ENCODE measurements at regions of chr15 and their contacts with region 1.

Region 1: DNA sequence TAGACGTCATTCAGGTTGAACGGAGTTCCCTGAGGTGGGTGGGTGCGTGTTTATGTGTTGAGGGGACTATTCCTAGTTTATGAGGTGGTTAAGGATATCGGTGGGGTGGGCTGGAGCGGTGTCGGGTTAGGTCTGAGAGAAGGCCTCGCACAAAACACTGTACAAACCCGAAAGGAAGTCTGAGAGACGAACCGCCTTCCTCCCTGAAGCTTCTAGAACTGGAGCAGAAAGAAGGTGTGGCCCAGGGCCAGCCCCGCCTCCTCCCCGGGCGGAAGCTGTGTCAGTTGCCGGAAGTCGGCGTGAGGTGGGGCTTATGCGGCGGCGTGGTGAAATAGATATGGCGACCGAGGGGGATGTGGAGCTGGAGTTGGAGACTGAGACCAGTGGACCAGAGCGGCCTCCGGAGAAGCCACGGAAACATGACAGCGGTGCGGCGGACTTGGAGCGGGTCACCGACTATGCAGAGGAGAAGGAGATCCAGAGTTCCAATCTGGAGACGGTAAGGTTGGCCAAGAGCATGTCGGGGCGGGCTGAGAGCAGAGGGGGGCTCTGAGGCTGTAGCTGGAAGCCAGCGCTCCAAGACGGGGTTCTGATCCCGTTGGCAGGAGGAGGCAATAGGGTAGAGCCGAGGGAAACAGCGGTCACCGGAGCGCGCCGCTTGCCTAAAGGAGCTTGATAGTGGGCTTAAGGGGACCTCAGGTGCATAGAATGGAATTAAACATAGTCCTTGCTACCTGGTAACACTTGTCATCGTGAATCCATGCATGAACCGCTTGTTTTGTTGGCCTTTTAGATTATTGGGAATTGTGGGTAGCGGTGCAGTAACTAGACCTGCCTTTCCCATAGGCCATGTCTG is at the start of gene HYPK:
- DNase-seq: peak; percentile 94
- H3K4me3 Mint-ChIP-seq: peak within 1 kb of the TSS; percentile 100
- H3K27ac Mint-ChIP-seq: peak within 1 kb of the TSS; percentile 93
- H3K4me1 Mint-ChIP-seq: peaks cover 47% of the 10 kb centered on the region
- H3K27me3 Mint-ChIP-seq: no peaks in the 10 kb centered on the region
- total RNA-seq, gene HYPK: 14.3 to 14.4 TPM

Region 2: DNA sequence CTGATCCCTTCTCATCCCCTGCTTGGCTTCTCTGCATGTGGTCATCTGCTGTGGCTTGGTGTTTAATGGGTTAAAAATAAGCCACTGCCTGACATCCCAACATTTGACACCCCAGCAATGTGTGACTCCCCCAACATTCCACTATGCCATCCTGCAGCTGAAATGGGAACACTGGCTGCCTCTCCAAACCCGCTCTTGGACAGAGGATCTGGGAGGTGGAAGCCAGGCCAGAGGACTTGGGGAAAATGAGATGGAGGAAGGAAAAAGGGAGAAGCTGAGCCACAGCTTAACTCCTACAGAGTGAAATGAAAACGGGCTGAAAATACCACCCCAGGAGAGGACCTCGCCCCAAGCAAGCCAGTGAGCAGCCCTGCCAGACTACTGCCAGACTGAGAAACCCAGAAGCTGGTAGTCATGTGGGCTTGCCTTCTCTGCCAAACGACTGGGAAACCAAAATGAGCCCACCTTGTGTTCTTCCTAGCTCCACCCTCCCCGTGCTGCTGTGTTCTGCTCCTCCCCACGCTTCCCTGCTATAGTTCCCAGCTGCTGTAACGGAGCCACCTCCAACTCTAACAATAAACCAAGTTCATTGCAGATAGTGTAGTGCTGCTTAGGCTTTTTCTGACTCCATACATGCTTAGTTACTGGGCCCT is 269.4 kb before region 1 on chr15:
- CTCF ChIA-PET with region 1: no interaction called
- POLR2A ChIA-PET with region 1: no interaction called
- DNase-seq: no peak
- H3K4me3 Mint-ChIP-seq: no peak overlapping the region
- H3K27ac Mint-ChIP-seq: no peak overlapping the region
- H3K4me1 Mint-ChIP-seq: peaks cover 4% of the 10 kb centered on the region
- H3K27me3 Mint-ChIP-seq: no peaks in the 10 kb centered on the region

Region 3: DNA sequence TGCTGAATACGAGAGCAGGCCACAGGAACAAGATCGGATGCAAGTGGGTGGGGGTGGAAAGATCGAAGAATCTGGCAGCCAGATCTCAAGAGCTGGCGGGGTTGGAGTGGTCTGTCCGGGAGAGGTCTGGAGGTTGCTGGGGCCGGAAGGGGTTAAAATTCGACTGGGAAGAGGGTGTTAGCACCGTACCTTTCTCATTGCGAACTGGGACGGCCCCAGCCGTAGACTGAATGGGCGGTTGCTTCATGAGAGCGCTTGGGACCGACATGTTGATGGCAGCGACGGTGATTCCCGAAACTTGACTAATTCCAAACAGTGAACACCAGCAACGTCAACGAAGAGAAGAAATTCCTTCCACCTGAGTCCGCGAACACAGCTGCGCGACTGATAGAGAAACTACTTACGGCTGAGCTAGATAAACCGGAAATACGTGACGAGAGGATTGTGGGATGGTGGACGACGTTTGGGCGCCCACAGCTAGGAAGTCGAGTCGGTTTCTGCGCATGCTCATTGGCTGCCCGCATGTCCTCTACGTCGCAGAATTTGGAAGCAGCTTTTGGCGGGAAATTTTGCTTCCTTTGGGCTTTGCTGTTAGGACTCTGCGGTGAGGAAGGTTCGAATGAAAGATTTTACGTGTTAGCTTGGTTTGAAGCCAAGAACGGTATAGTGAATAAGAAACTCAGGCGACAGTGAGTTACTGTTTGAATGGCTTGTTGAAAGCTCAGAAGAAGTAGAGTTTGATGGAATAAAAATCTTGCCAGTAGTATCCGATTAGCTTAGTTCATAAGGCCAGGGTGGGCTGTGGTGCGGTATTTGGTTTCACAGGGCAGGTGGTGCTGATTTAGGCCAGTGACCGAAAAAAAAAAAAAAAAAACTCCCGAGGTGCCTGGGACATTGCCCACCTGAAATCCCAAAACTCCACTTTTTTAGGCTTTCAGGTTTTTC is 24.1 kb after region 1 on chr15 and contains the start of gene MFAP1:
- CTCF ChIA-PET with region 1: interaction called, 5 read pairs
- POLR2A ChIA-PET with region 1: interaction called, 163 read pairs
- DNase-seq: peak; percentile 93
- H3K4me3 Mint-ChIP-seq: peak within 1 kb of the TSS; percentile 98
- H3K27ac Mint-ChIP-seq: peak within 1 kb of the TSS; percentile 93
- H3K4me1 Mint-ChIP-seq: peaks cover 71% of the 10 kb centered on the region
- H3K27me3 Mint-ChIP-seq: no peaks in the 10 kb centered on the region
- total RNA-seq, gene MFAP1: 34.4 to 37.3 TPM

Measured in activated CD4-positive, alpha-beta memory T cell treated with anti-CD3 and anti-CD28 coated beads, Interleukin-2, amount 10 ng/mL, durations not matched to agents 7 days and 5 days (primary cell).